ENCODE measurements at regions of chr7 and their contacts with region 1.

Region 1: DNA sequence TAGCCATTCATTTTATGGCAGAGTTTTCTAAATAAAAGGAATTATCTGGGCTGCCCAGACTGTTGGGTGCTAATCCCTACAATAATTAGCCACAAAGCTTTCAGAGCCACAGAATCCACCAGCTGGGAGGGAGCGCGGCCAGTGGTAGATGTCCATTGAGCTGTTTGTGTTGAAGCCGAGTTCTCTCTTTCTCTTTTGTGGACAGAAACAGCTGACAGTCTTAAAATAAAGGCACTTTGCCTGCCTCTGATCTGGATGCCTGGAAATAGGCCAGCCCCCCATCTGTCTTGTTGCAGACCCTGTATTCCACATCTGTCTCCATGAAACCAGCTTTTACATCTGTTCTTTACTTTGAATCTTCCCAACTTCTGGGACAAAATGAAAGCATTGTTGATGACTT is 66.1 kb downstream of the MTPN start:
- DNase-seq: peak in 4 of 5 donors; percentile 26 to 63 (median 41)
- ATAC-seq: peak in 3 of 4 donors; percentile 20 to 34 (median 29)
- H3K4me3 ChIP-seq: peak overlapping the region in 1 of 12 donors; percentile 5
- H3K27ac ChIP-seq: peak overlapping the region in 4 of 12 donors; percentile 4 to 37 (median 10)
- H3K4me1 ChIP-seq: peaks cover 0 to 24% (median 5%) of the 10 kb centered on the region in 12 donors
- H3K27me3 ChIP-seq: no peaks in the 10 kb centered on the region
- CTCF ChIP-seq: no peak
- POLR2A ChIP-seq: no peak

Region 2: DNA sequence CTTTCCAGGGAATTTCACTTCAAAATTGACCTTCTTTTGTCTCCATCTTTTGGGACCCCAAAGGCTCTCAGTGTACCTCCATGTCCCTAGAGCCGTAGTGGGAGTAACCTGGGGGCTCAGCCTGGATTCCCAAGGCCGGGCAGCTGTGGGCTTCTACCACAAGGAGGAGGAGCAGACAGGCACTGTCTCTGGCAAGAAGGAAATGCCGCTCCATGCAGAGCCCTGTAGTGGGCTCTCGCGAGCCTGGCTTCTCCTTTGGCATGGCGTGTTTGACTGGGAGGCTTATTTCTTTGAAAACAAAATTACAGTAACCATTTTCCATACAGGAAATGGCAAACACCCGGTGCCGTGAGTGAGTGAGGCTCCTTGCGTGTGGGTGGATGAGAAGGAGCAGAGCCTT is 85.7 kb before region 1 on chr7:
- intact Hi-C with region 1: loop called in 1 of 10 experiments (anchors 10 kb)
- DNase-seq: no peak
- ATAC-seq: no peak
- H3K4me3 ChIP-seq: no peak overlapping the region
- H3K27ac ChIP-seq: no peak overlapping the region
- H3K4me1 ChIP-seq: peaks cover 0 to under 1% (median 0%) of the 10 kb centered on the region in 12 donors
- H3K27me3 ChIP-seq: no peaks in the 10 kb centered on the region
- CTCF ChIP-seq: peak in 1 of 12 donors; percentile 3
- POLR2A ChIP-seq: no peak

Region 3: GRCh38 chr7:135877805-135878204 is 33.3 kb before region 1 on chr7:
- intact Hi-C with region 1: no loop called
- DNase-seq: no peak
- ATAC-seq: no peak
- H3K4me3 ChIP-seq: no peak overlapping the region
- H3K27ac ChIP-seq: no peak overlapping the region
- H3K4me1 ChIP-seq: peaks cover 0 to 9% (median 0%) of the 10 kb centered on the region in 12 donors
- H3K27me3 ChIP-seq: no peaks in the 10 kb centered on the region
- CTCF ChIP-seq: no peak
- POLR2A ChIP-seq: no peak